Caco-2 (cell line): ENCODE measurements at regions of chr3 and their contacts with region 1.

Region 1: DNA sequence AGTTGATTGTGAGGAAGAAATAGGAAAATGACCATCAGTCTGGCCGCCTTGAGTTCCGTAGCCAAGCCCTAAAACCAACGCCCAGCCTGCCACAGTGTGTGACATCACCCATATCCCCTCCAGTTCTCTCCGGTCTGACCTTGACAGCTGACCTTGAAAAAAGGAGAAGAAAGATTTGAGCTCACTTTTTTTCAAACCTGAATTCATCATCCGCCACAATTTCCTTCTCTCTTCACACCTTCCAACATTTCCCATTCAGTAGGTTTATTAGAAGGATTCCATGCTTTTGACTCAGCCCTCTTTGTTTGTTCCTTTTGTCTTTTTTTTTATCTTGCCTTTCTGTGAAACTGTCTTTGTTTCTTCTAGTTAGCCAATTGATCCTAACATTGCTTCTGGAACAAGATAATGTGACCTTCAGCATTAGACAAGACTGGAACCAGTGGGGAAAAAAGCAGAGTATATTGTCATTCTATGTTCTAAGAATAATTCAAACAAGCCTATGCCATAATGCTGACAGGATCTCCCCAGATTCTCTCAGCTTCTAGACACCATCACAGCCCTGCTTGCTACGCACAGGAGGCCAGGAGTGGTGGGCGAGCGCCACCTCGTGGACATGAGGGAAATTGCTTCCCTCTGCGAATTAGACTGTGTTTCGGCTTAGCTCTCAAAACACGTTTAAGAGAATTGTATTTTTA is 283.1 kb downstream of the FGF12 start:
- DNase-seq: peak; percentile 46 to 76
- H3K4me3 ChIP-seq: no peak overlapping the region
- H3K4me3 Mint-ChIP-seq: no peak overlapping the region
- H3K27ac Mint-ChIP-seq: no peak overlapping the region
- H3K4me1 ChIP-seq: no peaks in the 10 kb centered on the region
- H3K4me1 Mint-ChIP-seq: no peaks in the 10 kb centered on the region
- H3K27me3 ChIP-seq: no peaks in the 10 kb centered on the region; the same call in 1 of the 2 replicates
- H3K27me3 Mint-ChIP-seq: peaks cover 9% of the 10 kb centered on the region
- CTCF ChIP-seq: peak; percentile 95 to 97

Region 2: GRCh38 chr3:191412759-191413158 is 1031.5 kb before region 1 on chr3:
- CTCF ChIA-PET with region 1: interaction called, 12 read pairs
- POLR2A ChIA-PET with region 1: no interaction called
- intact Hi-C with region 1: loop called (anchors 1 kb)
- DNase-seq: no peak
- H3K4me3 ChIP-seq: no peak overlapping the region
- H3K4me3 Mint-ChIP-seq: no peak overlapping the region
- H3K27ac Mint-ChIP-seq: no peak overlapping the region
- H3K4me1 ChIP-seq: no peaks in the 10 kb centered on the region
- H3K4me1 Mint-ChIP-seq: no peaks in the 10 kb centered on the region
- H3K27me3 ChIP-seq: no peaks in the 10 kb centered on the region
- H3K27me3 Mint-ChIP-seq: no peaks in the 10 kb centered on the region
- CTCF ChIP-seq: no peak

Region 3: DNA sequence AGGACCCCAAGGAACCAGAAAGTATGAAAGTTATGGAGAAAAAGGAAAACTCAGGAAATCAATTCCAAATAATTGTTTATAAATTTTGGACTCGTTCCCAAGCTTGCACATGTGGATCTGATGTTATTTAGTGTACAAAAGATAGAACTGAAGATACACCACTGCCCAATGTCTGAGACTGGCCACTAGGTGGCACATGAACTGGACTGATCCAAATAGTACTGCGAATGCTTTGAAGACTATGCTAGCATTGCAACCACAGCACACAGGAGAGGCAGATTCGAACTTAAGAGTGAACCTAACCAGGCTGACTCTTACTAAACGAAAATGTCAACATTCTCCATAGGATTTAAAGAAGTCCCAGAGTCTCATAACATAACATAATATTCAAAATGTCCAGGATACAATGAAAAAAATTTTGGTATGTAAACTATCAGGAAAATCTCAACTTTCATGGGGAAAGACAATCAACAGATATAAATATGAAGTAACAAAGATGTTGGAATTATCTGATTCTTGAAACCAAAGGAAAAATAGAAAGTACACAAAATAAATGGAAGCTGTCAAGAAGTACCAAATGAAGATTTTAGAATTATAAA is 313.6 kb before region 1 on chr3:
- CTCF ChIA-PET with region 1: no interaction called
- POLR2A ChIA-PET with region 1: no interaction called
- intact Hi-C with region 1: loop called (anchors 1 kb)
- DNase-seq: peak; percentile 43 to 58
- H3K4me3 ChIP-seq: no peak overlapping the region
- H3K4me3 Mint-ChIP-seq: no peak overlapping the region
- H3K27ac Mint-ChIP-seq: no peak overlapping the region
- H3K4me1 ChIP-seq: peaks cover 6% of the 10 kb centered on the region; the same call in 1 of the 2 replicates
- H3K4me1 Mint-ChIP-seq: no peaks in the 10 kb centered on the region
- H3K27me3 ChIP-seq: no peaks in the 10 kb centered on the region
- H3K27me3 Mint-ChIP-seq: no peaks in the 10 kb centered on the region
- CTCF ChIP-seq: peak; percentile 65 to 72

Region 4: DNA sequence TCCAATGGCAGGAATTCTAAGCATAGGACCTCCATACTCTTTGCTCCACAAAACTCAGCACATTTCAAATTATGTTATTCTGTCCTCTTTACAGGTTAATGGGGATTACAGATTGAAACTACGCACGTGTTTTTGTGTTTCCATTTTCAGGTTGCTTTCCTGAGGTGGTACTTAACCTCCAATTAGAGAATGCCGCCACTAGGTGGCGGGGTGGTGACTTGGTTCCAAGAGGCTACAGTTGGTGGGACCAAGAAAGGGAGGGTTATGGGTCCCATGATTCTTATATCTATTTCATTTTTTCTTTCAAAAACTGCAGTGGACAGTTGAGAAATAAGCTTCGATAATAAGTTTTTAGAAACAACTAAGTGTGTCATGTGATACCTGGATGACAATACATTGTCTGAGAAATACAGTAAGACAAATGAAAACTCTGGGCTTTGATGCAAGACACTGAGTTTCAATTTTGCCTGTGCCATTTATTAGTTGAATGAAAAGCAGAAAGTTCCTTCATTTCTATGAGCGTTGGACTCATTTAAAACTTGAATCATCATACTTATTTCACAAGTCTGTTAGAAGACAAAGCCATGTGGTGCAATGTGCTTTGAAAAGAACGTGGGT is 255.9 kb before region 1 on chr3:
- CTCF ChIA-PET with region 1: no interaction called
- POLR2A ChIA-PET with region 1: interaction called, 3 read pairs
- intact Hi-C with region 1: loop called (anchors 1 kb)
- DNase-seq: peak; percentile 42 to 59
- H3K4me3 ChIP-seq: no peak overlapping the region
- H3K4me3 Mint-ChIP-seq: no peak overlapping the region
- H3K27ac Mint-ChIP-seq: no peak overlapping the region
- H3K4me1 ChIP-seq: no peaks in the 10 kb centered on the region
- H3K4me1 Mint-ChIP-seq: peaks cover 7% of the 10 kb centered on the region
- H3K27me3 ChIP-seq: no peaks in the 10 kb centered on the region
- H3K27me3 Mint-ChIP-seq: no peaks in the 10 kb centered on the region
- CTCF ChIP-seq: peak; percentile 72

Region 5: DNA sequence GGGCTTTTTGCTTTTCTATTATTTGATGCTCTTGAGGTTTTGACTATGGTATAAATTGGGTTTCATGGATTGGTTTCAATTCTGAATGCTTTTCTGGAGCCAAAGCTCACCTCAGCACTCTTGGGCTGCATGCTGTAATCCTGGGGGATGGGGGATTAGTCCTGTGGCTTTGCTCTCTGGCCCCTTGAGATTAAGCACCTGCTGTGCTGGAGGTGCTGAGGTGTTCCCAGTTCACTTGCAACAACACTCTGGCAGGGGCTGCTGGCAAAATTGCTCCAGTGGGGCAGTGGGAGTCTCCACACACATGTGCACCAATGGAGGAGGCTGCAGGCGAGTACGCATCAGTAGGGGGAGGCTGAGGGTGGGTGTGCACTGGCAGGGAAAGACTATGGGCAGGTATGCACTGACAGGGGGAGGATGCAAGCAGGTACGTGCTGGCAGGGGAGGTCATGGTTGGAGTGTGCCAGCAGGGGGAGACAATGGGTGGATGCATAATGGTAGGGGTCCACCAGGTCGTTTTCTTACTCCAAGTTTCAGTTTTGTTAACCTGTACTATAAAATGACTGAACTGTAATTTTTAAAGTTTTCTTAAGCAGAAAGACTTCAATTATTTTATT is 206.1 kb before region 1 on chr3:
- CTCF ChIA-PET with region 1: no interaction called
- POLR2A ChIA-PET with region 1: no interaction called
- intact Hi-C with region 1: loop called (anchors 10 kb)
- DNase-seq: peak; percentile 37 to 40
- H3K4me3 ChIP-seq: no peak overlapping the region
- H3K4me3 Mint-ChIP-seq: no peak overlapping the region
- H3K27ac Mint-ChIP-seq: no peak overlapping the region
- H3K4me1 ChIP-seq: peaks cover 11% of the 10 kb centered on the region
- H3K4me1 Mint-ChIP-seq: no peaks in the 10 kb centered on the region
- H3K27me3 ChIP-seq: no peaks in the 10 kb centered on the region
- H3K27me3 Mint-ChIP-seq: peaks cover 6% of the 10 kb centered on the region
- CTCF ChIP-seq: peak; percentile 20 to 43

Region 6: GRCh38 chr3:192423003-192423349 is 21.3 kb before region 1 on chr3:
- CTCF ChIA-PET with region 1: interaction called, 10 read pairs
- POLR2A ChIA-PET with region 1: no interaction called
- intact Hi-C with region 1: no loop called
- DNase-seq: no peak
- H3K4me3 ChIP-seq: no peak overlapping the region
- H3K4me3 Mint-ChIP-seq: no peak overlapping the region
- H3K27ac Mint-ChIP-seq: no peak overlapping the region
- H3K4me1 ChIP-seq: no peaks in the 10 kb centered on the region; the same call in 1 of the 2 replicates
- H3K4me1 Mint-ChIP-seq: no peaks in the 10 kb centered on the region
- H3K27me3 ChIP-seq: no peaks in the 10 kb centered on the region
- H3K27me3 Mint-ChIP-seq: peaks cover 3% of the 10 kb centered on the region
- CTCF ChIP-seq: no peak